Activated T-helper 2 cell treated with anti-CD3 and anti-CD28 coated beads, Interferon-gamma antibody, Interleukin-2, Interleukin-4, amounts not matched to agents 10 μg/mL and 5 μg/mL and 100 μg/mL, durations not matched to agents 14 hours and 24 hours and 36 hours (primary cell): ENCODE measurements at regions of chr10 and their contacts with region 1.

Region 1: GRCh38 chr10:63430097-63430998 is 35.4 kb downstream of the JMJD1C start:
- DNase-seq: no peak
- H3K4me3 Mint-ChIP-seq: no peak overlapping the region
- H3K27ac Mint-ChIP-seq: no peak overlapping the region
- H3K4me1 Mint-ChIP-seq: peaks cover 13% of the 10 kb centered on the region
- H3K27me3 Mint-ChIP-seq: no peaks in the 10 kb centered on the region

Region 2: GRCh38 chr10:62491597-62491996 is 938.8 kb before region 1 on chr10:
- intact Hi-C with region 1: no loop called
- DNase-seq: no peak
- H3K4me3 Mint-ChIP-seq: no peak overlapping the region
- H3K27ac Mint-ChIP-seq: no peak overlapping the region
- H3K4me1 Mint-ChIP-seq: no peaks in the 10 kb centered on the region
- H3K27me3 Mint-ChIP-seq: peaks cover 29% of the 10 kb centered on the region

Region 3: DNA sequence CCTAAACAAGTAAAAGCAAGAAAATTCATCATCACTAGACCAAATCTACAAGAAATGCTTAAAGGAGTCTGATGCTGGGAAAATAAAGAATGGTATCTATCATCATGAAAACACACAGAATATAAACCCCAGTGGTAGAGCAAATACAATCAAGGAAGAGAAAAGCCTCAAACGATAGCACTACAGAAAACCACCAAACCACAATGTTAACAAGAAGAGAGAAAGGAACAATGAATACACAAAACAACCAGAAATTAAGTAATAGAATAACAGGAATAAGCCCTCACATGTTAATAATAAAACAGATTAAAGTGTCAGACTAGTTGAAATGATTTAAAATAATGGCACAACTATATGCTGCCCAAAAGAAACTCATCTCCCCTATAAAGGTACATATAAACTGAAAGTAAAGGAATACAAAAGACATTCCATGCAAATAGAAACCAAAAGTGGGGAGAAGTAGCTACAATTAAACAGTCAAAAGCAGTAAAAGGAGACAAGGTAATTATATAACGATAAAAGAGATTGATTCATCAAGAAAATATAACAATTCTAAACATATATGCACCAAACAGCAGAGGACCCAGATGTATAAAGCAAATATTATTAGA is 41.8 kb before region 1 on chr10:
- intact Hi-C with region 1: loop called (anchors 10 kb)
- DNase-seq: no peak
- H3K4me3 Mint-ChIP-seq: peak overlapping the region; percentile 61
- H3K27ac Mint-ChIP-seq: peak overlapping the region; percentile 45
- H3K4me1 Mint-ChIP-seq: peaks cover 42% of the 10 kb centered on the region
- H3K27me3 Mint-ChIP-seq: peaks cover 2% of the 10 kb centered on the region